ENCODE measurements at regions of chr5 and their contacts with region 1.

Region 1: GRCh38 chr5:40410231-40410861 is 269.4 kb upstream of the PTGER4 start:
- DNase-seq: peak; percentile 88
- H3K4me3 Mint-ChIP-seq: peak overlapping the region; percentile 58
- H3K27ac Mint-ChIP-seq: peak overlapping the region; percentile 98
- H3K4me1 Mint-ChIP-seq: peaks cover 64% of the 10 kb centered on the region
- H3K27me3 Mint-ChIP-seq: no peaks in the 10 kb centered on the region

Region 2: DNA sequence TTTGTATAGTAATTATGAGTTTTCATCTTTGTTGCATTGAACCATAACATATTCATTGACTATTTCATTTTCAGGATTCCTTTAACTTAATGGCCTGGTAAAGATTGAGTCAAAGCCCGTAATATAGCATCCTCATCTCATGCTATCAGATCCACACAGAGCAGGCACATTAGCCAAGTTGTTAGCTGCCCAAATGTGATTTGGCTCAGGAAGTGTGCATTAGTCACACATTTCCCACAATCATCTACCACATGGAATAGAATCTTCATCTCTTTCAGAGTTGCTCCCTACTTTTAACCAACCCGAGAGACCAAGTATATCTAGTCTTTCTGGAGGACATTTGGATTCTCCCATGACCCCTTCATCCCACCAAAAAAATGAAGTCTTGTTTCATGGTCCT is 211.6 kb before region 1 on chr5:
- CTCF ChIA-PET with region 1: no interaction called
- intact Hi-C with region 1: no loop called
- DNase-seq: no peak
- H3K4me3 Mint-ChIP-seq: no peak overlapping the region
- H3K27ac Mint-ChIP-seq: no peak overlapping the region
- H3K4me1 Mint-ChIP-seq: peaks cover 10% of the 10 kb centered on the region
- H3K27me3 Mint-ChIP-seq: no peaks in the 10 kb centered on the region

Region 3: DNA sequence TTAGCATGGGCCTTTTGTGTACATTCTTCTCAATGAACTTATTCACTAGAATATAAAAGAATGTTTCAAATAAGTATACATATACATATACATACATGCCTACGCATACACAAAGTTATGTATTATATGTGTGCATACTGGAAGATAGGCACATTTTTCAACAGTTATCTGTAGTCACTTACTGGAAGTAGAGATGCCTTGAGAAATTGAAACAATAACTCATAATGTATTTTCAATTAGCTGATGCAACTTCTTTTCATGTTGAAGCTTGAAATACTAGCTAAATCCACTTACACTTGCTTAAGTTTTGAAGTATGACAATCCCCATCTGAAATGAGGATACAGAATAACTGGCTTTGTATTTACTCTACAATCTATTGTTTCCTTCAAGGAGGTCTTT is 199.7 kb before region 1 on chr5:
- CTCF ChIA-PET with region 1: no interaction called
- intact Hi-C with region 1: loop called (anchors 1 kb)
- DNase-seq: no peak
- H3K4me3 Mint-ChIP-seq: no peak overlapping the region
- H3K27ac Mint-ChIP-seq: peak overlapping the region; percentile 98
- H3K4me1 Mint-ChIP-seq: peaks cover 63% of the 10 kb centered on the region
- H3K27me3 Mint-ChIP-seq: no peaks in the 10 kb centered on the region

Region 4: DNA sequence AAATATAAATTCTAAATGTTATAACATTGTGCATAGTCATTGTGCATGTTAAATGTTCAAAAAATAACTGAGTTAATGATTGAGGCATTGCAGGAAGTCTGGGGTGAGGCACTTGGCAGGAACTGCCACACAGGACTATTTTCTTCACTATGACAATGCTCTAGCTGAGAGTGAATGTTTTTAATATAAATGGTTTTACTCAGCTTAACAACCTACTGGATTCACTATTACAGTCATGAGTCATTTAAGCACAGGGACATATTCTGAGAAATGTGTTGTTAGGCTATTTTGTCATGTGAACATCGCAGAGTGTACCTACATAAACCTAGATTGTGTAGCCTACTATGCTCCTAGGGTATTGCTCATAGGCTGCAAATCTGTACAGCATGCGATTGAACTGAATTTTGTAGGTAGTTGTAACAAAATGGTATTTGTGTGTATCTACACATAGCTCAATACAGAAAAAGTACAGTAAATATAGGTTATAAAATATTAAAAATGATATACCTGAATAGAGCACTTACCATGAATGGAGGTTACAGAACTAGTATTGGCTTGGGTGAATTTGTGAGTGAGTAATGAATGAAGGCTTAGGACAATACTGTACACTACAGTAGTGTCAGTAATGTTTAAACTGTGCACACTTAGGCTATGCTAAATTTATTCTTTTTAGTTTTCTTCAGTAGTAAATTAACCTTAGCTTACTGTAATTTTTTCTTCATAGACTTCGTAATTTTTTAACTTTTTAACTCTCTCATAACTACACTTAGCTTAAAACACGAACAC is 76.7 kb before region 1 on chr5:
- CTCF ChIA-PET with region 1: no interaction called
- intact Hi-C with region 1: loop called (anchors 1 kb)
- DNase-seq: peak; percentile 63
- H3K4me3 Mint-ChIP-seq: no peak overlapping the region
- H3K27ac Mint-ChIP-seq: peak overlapping the region; percentile 41
- H3K4me1 Mint-ChIP-seq: peaks cover 15% of the 10 kb centered on the region
- H3K27me3 Mint-ChIP-seq: peaks cover 3% of the 10 kb centered on the region

Region 5: GRCh38 chr5:40428126-40428525 is 17.8 kb after region 1 on chr5:
- CTCF ChIA-PET with region 1: interaction called, 18 read pairs
- intact Hi-C with region 1: loop called (anchors 1 kb)
- DNase-seq: peak; percentile 58
- H3K4me3 Mint-ChIP-seq: no peak overlapping the region
- H3K27ac Mint-ChIP-seq: no peak overlapping the region
- H3K4me1 Mint-ChIP-seq: peaks cover 35% of the 10 kb centered on the region
- H3K27me3 Mint-ChIP-seq: no peaks in the 10 kb centered on the region

Measured in activated naive CD4-positive, alpha-beta T cell treated with anti-CD3 and anti-CD28 coated beads for 36 hours (primary cell).